ENCODE measurements at regions of chr7 and their contacts with region 1.

Region 1: GRCh38 chr7:30983042-30983913 is 19.5 kb downstream of the GHRHR start:
- DNase-seq: peak; percentile 94
- H3K4me3 ChIP-seq: peak overlapping the region in 1 of 2 experiments; percentile 8; a peak in 1 of 4 replicates
- H3K27ac ChIP-seq: no peak overlapping the region
- H3K4me1 ChIP-seq: peaks cover 0 to 7% of the 10 kb centered on the region in 2 experiments; a peak in 1 of 4 replicates
- H3K27me3 ChIP-seq: peaks cover 20% of the 10 kb centered on the region; the same call in 1 of the 2 replicates
- CTCF ChIP-seq: peak; percentile 97
- EP300 ChIP-seq: no peak
- RAD21 ChIP-seq: peak; percentile 100

Region 2: GRCh38 chr7:30800785-30801252 is 182.5 kb before region 1 on chr7:
- CTCF ChIA-PET with region 1: interaction called, 28 read pairs
- POLR2A ChIA-PET with region 1: no interaction called
- DNase-seq: peak; percentile 89
- H3K4me3 ChIP-seq: no peak overlapping the region
- H3K27ac ChIP-seq: peak overlapping the region in 1 of 2 experiments; percentile 4; a peak in 2 of 4 replicates
- H3K4me1 ChIP-seq: peaks cover 24 to 51% of the 10 kb centered on the region in 2 experiments
- H3K27me3 ChIP-seq: no peaks in the 10 kb centered on the region
- CTCF ChIP-seq: peak; percentile 96
- EP300 ChIP-seq: no peak
- RAD21 ChIP-seq: peak; percentile 100

Region 3: DNA sequence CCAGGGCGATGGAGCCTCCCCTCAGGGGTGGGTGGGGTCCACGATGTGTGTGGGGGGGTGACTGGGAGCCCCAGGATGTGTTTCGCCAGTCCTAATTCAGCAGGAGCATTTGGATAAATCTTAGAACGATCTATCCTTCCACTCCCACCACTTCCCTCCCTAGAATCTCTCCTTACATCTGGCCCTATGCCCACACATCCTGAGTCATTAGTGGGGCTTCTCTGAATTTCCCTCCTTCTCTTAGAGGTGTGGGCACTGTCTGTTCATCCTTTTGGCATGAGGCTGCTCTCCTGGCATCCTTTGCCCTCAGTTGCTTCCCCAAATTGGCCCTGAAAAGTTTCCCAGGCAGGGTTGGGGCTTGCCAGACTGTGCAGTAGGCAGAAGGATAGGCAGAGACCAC is 17.9 kb before region 1 on chr7:
- CTCF ChIA-PET with region 1: interaction called, 119 read pairs
- POLR2A ChIA-PET with region 1: no interaction called
- DNase-seq: no peak
- H3K4me3 ChIP-seq: no peak overlapping the region
- H3K27ac ChIP-seq: no peak overlapping the region
- H3K4me1 ChIP-seq: no peaks in the 10 kb centered on the region
- H3K27me3 ChIP-seq: peaks cover 52% of the 10 kb centered on the region
- CTCF ChIP-seq: no peak
- EP300 ChIP-seq: no peak
- RAD21 ChIP-seq: no peak

Region 4: GRCh38 chr7:31002256-31002655 is 19.0 kb after region 1 on chr7:
- CTCF ChIA-PET with region 1: interaction called, 17 read pairs
- POLR2A ChIA-PET with region 1: no interaction called
- DNase-seq: peak; percentile 68
- H3K4me3 ChIP-seq: no peak overlapping the region
- H3K27ac ChIP-seq: no peak overlapping the region
- H3K4me1 ChIP-seq: no peaks in the 10 kb centered on the region; a peak in 1 of 4 replicates
- H3K27me3 ChIP-seq: peaks cover 19% of the 10 kb centered on the region; the same call in 1 of the 2 replicates
- CTCF ChIP-seq: no peak
- EP300 ChIP-seq: no peak
- RAD21 ChIP-seq: no peak

Region 5: GRCh38 chr7:31036924-31037323 is 53.6 kb after region 1 on chr7:
- CTCF ChIA-PET with region 1: interaction called, 100 read pairs
- POLR2A ChIA-PET with region 1: no interaction called
- DNase-seq: no peak
- H3K4me3 ChIP-seq: no peak overlapping the region
- H3K27ac ChIP-seq: no peak overlapping the region
- H3K4me1 ChIP-seq: no peaks in the 10 kb centered on the region; a peak in 1 of 4 replicates
- H3K27me3 ChIP-seq: peaks cover 35% of the 10 kb centered on the region
- CTCF ChIP-seq: no peak
- EP300 ChIP-seq: no peak
- RAD21 ChIP-seq: no peak

Region 6: DNA sequence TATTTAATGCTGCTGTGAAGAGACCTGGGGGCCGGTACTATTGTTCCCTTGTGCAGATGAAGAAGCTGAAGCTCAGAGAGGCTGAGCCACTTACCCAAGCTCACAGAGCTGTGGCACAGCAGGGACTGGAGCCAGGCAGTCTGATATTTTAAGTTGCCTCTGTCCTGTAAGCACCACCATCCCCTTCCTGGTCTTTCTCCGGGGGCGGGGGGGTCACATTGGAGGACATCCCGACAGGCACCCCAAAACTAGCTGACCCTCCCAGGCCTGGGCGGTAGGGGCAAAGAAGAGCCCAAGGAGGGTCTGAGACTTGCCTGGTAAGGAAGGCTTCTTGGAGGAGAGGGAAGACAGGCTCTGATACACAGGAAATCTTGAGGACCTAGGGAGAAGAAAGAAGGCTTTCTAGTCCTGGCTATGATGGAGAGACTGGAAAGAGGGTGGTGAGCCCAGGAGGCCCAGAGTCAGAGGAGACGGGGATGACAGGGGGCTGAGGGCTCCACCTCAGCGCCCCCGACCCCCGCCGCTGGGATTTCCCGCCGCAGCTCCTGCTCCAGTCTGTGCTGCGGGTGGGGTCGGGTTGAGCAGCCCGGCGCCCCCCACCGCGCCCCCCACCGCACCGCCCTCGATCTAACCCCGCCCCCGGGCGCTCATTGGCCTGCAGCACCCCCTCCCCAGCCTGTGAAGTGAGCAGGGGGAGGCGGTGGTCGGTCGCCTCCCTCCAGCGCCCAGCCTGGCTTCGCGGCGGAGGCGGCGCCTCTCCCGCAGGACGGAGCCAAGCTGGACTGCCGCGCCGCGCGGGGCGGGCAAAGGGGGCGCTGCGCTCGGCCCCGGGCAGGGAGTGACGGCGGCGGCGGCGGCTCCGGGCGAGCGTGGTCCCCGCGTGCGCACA is 68.6 kb after region 1 on chr7 and contains the start of gene ADCYAP1R1:
- CTCF ChIA-PET with region 1: interaction called, 100 read pairs
- POLR2A ChIA-PET with region 1: interaction called, 5 read pairs
- DNase-seq: peak; percentile 99
- H3K4me3 ChIP-seq: peak within 1 kb of the TSS; percentile 29 to 55; a peak in 3 of 4 replicates
- H3K27ac ChIP-seq: peak within 1 kb of the TSS in 1 of 2 experiments; percentile 59; a peak in 2 of 4 replicates
- H3K4me1 ChIP-seq: peaks cover 0 to 68% of the 10 kb centered on the region in 2 experiments; a peak in 2 of 4 replicates
- H3K27me3 ChIP-seq: peaks cover 48% of the 10 kb centered on the region
- CTCF ChIP-seq: no peak
- EP300 ChIP-seq: no peak
- RAD21 ChIP-seq: no peak
- polyA plus RNA-seq, gene ADCYAP1R1: 0.08 and 0.71 TPM in 2 replicates

Region 7: DNA sequence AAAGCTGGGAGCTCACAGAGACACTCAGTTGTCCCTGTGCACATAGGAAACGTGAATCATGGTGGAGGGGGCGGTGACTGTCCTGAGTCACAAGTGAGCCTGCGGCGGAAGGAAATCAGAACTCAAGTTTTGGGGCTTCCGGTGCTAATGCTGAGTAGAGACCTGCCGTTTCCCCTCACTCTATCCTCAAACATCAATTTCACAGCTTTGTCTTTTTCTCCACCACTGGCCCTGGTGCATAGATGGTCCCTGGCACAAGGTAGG is 90.8 kb after region 1 on chr7:
- CTCF ChIA-PET with region 1: interaction called, 33 read pairs
- POLR2A ChIA-PET with region 1: no interaction called
- DNase-seq: no peak
- H3K4me3 ChIP-seq: no peak overlapping the region
- H3K27ac ChIP-seq: no peak overlapping the region
- H3K4me1 ChIP-seq: no peaks in the 10 kb centered on the region
- H3K27me3 ChIP-seq: peaks cover 23% of the 10 kb centered on the region; the same call in 1 of the 2 replicates
- CTCF ChIP-seq: no peak
- EP300 ChIP-seq: no peak
- RAD21 ChIP-seq: no peak

Region 8: DNA sequence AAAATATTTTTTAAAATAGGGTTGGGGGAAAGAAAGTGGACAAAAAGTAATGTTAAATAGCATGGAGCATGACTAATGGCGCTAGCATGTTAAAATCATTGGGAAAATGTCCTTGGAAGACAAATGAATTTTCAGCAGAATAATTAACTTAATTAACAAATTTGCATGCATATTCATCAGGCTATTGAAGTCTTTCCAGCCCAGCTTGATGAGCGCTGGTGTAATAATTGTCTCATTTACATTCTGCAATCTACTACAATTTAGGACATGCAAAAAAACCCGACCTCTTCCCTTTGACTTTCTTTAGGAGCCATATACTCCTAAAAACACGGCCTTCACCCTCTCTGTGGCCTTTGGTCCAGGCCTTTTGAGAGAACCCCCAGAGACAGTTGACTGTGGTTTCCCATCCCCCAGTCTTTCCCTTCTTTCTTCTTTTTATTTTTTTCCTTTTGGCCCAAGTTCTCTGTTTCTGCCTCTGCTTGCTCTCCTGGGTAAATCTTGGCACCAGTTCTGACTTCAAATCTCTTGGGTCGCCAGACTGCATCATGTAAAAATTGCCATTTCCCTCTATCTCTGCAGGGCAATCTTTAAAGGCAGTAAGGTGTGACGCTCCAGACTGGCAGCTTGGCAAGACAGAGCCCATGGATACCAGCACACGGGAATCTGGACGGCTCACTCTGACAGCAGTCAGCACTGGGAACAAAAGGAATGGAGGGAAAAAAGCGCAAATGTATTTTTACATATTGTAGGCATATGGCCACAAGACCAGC is 251.7 kb after region 1 on chr7:
- CTCF ChIA-PET with region 1: no interaction called
- POLR2A ChIA-PET with region 1: no interaction called
- DNase-seq: no peak
- H3K4me3 ChIP-seq: no peak overlapping the region
- H3K27ac ChIP-seq: no peak overlapping the region
- H3K4me1 ChIP-seq: no peaks in the 10 kb centered on the region
- H3K27me3 ChIP-seq: peaks cover 7% of the 10 kb centered on the region; the same call in 1 of the 2 replicates
- CTCF ChIP-seq: no peak
- EP300 ChIP-seq: no peak
- RAD21 ChIP-seq: no peak

Measured in SK-N-SH (cell line).